Activated T-helper 1 cell treated with anti-CD3 and anti-CD28 coated beads, Interleukin-12 subunit alpha, Interleukin-12 subunit beta, Interleukin-2, Interleukin-4 antibody, amounts not matched to agents 30 ng/mL and 10 ng/mL and 1 ng/mL, durations not matched to agents 14 hours and 24 hours and 36 hours (primary cell): ENCODE measurements at regions of chr10 and their contacts with region 1.

Region 1: DNA sequence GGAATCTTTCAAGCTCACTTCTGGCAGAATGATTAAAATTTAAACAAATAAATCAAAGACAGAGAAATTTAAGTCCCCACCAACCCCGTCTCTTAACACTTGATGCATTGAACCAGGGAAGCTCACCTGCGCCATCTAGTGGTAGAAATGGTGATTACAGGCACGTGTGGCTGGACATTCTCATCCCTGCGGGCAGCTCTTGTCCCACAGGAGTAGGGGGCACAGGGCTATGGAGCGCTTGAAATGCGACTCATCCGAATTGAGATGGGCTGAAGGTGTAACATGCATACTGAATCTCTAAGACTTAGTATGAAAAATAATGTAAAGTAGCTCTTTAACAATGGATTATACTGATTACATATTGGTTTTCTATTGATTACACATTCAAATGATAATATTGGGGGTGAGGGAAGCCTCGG is 24.8 kb upstream of the SLIT1 start:
- DNase-seq: peak; percentile 41
- H3K4me3 Mint-ChIP-seq: no peak overlapping the region
- H3K27ac Mint-ChIP-seq: no peak overlapping the region
- H3K4me1 Mint-ChIP-seq: no peaks in the 10 kb centered on the region
- H3K27me3 Mint-ChIP-seq: peaks cover 2% of the 10 kb centered on the region

Region 2: DNA sequence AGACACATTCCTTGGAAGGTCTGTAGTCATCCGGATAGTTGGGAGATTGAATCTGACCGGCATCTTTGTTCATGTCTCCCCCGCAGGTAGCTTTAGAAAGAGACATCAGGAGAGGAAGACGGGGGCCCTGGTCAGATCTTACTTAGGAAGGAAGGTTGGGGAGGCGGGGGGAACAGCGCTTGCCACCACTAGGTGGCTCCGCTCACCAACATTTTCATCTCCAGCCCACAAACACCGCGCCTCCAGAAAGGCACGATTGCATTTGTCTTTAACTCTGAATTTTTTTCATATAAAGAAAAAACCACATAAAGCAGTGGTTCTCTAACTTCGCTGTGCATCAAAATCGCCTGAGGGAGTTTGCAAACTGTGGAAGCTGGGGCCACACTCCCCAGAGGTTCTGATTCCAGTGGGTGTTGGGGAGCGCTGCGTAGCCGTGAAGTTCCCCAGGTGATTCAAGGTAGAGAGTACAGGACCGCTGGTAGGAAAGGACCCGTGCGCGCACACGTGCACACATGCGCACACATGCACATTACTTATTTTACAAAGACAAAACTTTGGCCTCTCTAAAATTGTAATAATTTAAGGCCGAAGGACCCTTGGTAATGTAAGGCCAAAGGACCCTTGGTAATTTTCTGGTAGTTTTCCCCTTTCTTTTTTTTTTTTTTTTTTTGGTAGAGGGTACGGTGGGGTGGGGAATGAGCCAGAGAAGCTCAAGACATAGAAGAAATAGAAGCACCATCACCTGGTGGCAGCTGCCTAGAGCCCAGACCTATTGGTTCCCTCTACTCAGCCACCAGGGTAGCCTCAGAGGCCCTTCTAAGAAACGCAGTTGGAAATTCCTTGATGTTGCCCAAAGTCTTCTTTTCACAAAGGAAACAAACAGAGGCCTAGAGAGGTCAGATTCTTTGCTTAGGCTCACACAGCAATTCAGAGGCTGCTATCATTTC is 814.3 kb before region 1 on chr10:
- intact Hi-C with region 1: loop called (anchors 1 kb)
- DNase-seq: peak; percentile 21
- H3K4me3 Mint-ChIP-seq: no peak overlapping the region
- H3K27ac Mint-ChIP-seq: no peak overlapping the region
- H3K4me1 Mint-ChIP-seq: no peaks in the 10 kb centered on the region
- H3K27me3 Mint-ChIP-seq: peaks cover 37% of the 10 kb centered on the region

Region 3: DNA sequence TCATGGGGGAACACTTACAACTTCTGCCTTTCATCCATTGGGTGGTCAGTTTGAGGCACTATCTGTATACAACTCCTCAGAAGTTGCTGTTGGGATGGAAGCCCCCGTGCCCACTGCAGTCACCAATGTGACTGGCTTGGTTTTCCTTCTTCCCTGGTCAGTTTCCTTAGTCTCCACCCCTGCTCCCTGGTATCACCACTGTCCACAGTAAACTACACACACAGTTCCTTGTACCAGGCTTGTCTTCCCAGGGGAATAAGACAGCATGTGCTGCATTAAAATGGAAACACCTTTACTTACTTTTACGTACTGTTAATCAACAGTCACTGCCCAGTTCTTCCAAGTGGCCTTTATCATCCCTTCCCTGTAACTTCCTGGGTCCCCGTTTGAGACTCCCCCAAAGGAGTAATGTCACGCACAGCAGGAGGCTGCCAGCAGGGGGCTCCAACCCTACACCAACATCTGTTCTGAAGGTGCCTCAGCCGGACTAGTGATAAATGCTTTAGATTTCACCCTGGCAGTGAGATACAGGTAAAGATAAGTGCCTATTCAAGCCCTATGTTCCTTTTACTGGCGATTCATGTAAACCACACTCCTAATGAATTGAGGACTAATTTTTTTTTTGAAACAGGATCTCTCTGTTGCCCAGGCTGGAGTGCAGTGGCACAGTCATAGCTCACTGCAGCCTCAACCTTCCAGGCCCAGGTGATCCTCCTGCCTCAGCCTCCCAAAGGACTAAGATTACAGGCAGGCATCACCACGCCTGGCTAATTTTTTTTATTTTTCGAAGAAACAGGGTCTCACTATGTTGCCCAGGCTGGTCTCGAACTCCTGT is 444.9 kb before region 1 on chr10:
- intact Hi-C with region 1: loop called (anchors 10 kb)
- DNase-seq: peak; percentile 42
- H3K4me3 Mint-ChIP-seq: no peak overlapping the region
- H3K27ac Mint-ChIP-seq: no peak overlapping the region
- H3K4me1 Mint-ChIP-seq: peaks cover 6% of the 10 kb centered on the region
- H3K27me3 Mint-ChIP-seq: peaks cover 7% of the 10 kb centered on the region

Region 4: GRCh38 chr10:97037365-97038361 is 172.9 kb before region 1 on chr10:
- intact Hi-C with region 1: loop called (anchors 1 kb)
- DNase-seq: peak; percentile 49
- H3K4me3 Mint-ChIP-seq: peak overlapping the region; percentile 50
- H3K27ac Mint-ChIP-seq: no peak overlapping the region
- H3K4me1 Mint-ChIP-seq: peaks cover 16% of the 10 kb centered on the region
- H3K27me3 Mint-ChIP-seq: peaks cover 5% of the 10 kb centered on the region

Region 5: GRCh38 chr10:97081621-97082235 is 128.8 kb before region 1 on chr10:
- intact Hi-C with region 1: loop called (anchors 2 kb)
- DNase-seq: peak; percentile 38
- H3K4me3 Mint-ChIP-seq: no peak overlapping the region
- H3K27ac Mint-ChIP-seq: no peak overlapping the region
- H3K4me1 Mint-ChIP-seq: no peaks in the 10 kb centered on the region
- H3K27me3 Mint-ChIP-seq: peaks cover 13% of the 10 kb centered on the region